Activated CD4-positive, alpha-beta T cell treated with anti-CD3 and anti-CD28 coated beads for 36 hours (primary cell): ENCODE measurements at regions of chr1 and their contacts with region 1.

Region 1: DNA sequence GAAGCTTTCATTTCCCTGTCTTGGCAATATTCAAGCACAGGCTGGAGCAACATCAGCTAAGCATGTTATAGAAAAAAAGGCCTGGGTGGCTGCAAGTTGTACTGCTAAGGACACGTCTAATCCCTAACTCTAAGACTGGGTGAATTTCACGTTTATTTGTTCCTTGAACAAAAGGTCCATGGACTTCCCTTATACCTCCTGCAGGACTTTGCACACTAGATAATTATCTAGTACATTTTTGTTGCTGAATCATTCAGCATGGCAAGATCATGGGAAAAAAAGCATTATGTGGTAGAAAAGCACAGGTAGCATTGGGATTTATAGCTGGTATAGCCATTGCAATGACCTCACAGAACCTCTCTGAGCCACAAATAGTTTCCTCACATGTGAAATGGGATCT is 130.7 kb upstream of the DMRTA2 start:
- DNase-seq: no peak
- ATAC-seq: no peak
- H3K4me3 Mint-ChIP-seq: no peak overlapping the region
- H3K27ac Mint-ChIP-seq: no peak overlapping the region
- H3K4me1 Mint-ChIP-seq: no peaks in the 10 kb centered on the region
- H3K27me3 Mint-ChIP-seq: no peaks in the 10 kb centered on the region

Region 2: GRCh38 chr1:50300297-50300696 is 253.6 kb before region 1 on chr1:
- CTCF ChIA-PET with region 1: no interaction called
- POLR2A ChIA-PET with region 1: no interaction called
- intact Hi-C with region 1: no loop called
- DNase-seq: no peak
- ATAC-seq: no peak
- H3K4me3 Mint-ChIP-seq: no peak overlapping the region
- H3K27ac Mint-ChIP-seq: no peak overlapping the region
- H3K4me1 Mint-ChIP-seq: no peaks in the 10 kb centered on the region
- H3K27me3 Mint-ChIP-seq: peaks cover 2% of the 10 kb centered on the region

Region 3: GRCh38 chr1:50582346-50582745 is 28.4 kb after region 1 on chr1:
- CTCF ChIA-PET with region 1: interaction called, 3 read pairs
- POLR2A ChIA-PET with region 1: no interaction called
- intact Hi-C with region 1: loop called in 1 of 2 experiments (anchors 1 kb)
- DNase-seq: no peak
- ATAC-seq: no peak
- H3K4me3 Mint-ChIP-seq: no peak overlapping the region
- H3K27ac Mint-ChIP-seq: no peak overlapping the region
- H3K4me1 Mint-ChIP-seq: no peaks in the 10 kb centered on the region
- H3K27me3 Mint-ChIP-seq: no peaks in the 10 kb centered on the region